ENCODE measurements at regions of chr22 and their contacts with region 1.

Region 1: DNA sequence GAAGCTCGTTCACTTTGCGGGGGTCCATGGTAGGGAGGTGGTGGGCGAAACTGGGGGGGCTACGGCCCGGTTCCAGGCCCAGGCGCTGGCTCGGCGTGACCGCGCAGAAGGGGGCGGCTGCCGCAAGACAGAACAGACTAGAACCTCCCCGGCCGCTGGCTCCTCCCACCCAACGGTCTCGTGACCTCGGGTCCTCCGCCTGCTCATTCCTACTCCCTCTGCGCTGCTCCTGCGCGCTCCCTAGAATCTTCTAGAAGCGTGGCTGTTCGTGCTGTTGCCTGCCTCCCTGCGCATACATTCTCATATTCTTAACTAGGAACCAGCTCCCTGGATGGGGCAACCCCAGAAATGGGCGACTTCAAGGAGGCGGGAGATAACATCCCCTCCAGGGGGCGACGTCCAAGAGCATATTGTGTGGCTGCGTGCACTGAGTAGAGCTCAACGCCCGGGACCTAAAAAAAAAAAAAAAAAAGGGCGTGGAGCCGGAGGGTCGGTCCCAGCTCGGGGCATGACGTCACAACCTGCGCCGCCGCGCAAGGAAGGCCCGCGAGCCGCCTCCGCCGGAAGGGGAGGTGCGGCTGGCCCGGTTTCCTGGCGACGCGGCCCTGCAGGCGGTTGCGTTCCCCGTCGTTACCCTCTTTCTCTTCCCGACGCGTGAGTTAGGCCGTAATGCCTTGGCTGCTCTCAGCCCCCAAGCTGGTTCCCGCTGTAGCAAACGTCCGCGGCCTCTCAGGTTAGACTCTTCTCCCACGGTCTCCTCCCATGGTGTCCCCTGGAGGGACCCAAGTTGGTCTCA is at the starts of genes ST13 and XPNPEP3:
- DNase-seq: peak; percentile 98 to 99 (median 99)
- H3K4me3 ChIP-seq: peak within 1 kb of the TSS; percentile 89 to 99 (median 92)
- H3K27ac ChIP-seq: peak within 1 kb of the TSS; percentile 93 to 99 (median 96)
- H3K4me1 ChIP-seq: peaks cover 22 to 56% of the 10 kb centered on the region in 2 donors
- H3K27me3 ChIP-seq: no peaks in the 10 kb centered on the region
- CTCF ChIP-seq: peak in 3 of 6 experiments; percentile 14 to 28 (median 20)
- POLR2A ChIP-seq: peak; percentile 63 to 86
- total RNA-seq, gene ST13: 187 to 575 (median 243) TPM
- total RNA-seq, gene XPNPEP3: 12.9 to 41.1 (median 23.7) TPM

Region 2: DNA sequence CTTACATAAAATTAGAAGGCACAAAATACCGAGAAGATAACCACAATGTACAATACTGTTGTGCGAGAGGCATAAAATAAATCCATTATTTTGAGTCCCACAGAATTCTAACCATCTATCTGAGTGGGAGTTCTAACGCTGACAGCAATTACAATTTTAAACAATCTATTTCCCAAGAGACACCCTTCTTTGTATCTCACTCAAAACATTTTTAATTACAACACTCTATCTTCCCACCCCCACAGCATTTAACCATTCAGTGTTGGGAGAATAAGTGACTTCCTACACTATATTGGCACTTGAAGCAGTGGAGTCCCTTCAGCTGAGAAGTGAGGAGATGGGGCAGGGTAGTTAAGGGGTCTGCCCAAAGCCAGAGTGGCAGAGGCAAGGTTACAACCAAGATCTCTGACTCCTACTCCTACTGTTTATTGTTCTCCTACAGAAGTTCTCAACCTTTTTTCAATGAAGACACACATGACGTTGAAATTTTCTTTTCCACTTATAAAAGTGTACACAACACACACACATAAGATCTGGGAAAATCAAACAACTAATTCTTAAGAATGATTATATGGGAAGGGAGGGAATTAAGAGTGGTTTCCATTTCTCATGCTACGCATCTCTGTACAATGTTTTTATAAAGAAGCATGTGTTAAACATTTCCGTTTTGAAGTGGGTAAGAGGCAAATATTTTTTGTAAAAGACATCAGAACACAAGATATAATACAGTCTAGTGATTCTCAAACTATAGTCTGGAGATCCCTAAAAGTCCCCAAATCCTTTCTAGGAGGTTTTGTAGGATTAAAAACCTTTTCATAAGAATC is 48.5 kb before region 1 on chr22:
- intact Hi-C with region 1: no loop called
- DNase-seq: no peak
- H3K4me3 ChIP-seq: no peak overlapping the region
- H3K27ac ChIP-seq: no peak overlapping the region
- H3K4me1 ChIP-seq: peaks cover 0 to 7% of the 10 kb centered on the region in 2 donors
- H3K27me3 ChIP-seq: no peaks in the 10 kb centered on the region
- CTCF ChIP-seq: no peak
- POLR2A ChIP-seq: no peak

Region 3: DNA sequence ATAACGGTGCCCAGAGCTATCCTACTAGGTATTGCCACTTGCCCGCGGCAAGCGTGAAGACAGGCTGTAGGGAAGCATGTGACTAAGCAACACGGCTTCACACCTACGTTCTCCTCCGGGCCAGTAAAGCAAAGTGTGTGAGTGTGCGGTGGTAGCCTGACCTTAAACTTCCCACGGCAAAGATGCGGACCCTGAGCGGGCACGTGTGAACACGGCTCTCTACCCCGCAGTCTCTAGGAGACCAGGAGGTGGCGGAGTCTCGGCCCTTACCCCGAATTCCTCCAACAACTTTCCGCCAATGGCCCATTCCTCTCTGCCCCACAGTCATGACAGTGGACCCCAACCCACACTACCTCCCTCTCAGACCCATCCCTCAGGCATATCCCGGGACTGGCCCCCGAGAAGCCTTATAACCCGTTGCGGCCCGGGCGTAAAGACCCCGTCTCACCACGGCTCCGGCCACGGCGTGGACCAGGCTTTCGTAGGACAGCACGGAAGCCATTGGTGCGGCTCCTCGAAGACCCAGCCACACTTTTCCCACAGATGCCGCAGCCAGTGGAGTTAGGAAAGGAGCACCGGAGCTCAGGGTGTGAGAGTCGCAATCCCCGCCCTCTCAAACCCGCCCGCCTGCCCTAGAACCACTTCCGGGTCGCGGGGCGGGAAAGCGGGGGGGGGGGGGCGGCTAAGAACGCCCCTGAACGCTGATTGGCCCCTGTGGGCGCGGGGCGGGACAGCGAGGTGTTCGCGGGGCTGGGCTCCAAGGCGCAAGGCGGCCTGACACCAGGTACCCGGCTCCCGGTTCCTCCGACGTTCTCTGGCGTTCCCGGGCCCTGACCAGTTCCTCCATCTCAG is 37.7 kb before region 1 on chr22 and contains the start of gene SLC25A17:
- intact Hi-C with region 1: no loop called
- DNase-seq: peak; percentile 87 to 92 (median 89)
- H3K4me3 ChIP-seq: peak within 1 kb of the TSS; percentile 54 to 100 (median 94)
- H3K27ac ChIP-seq: peak within 1 kb of the TSS; percentile 59 to 88 (median 72)
- H3K4me1 ChIP-seq: peaks cover 12 to 26% of the 10 kb centered on the region in 2 donors
- H3K27me3 ChIP-seq: no peaks in the 10 kb centered on the region
- CTCF ChIP-seq: peak; percentile 8 to 61 (median 38)
- POLR2A ChIP-seq: peak in 1 of 2 donors; percentile 39
- total RNA-seq, gene SLC25A17: 18.3 to 40.8 (median 22.4) TPM

Region 4: GRCh38 chr22:41169157-41169556 is 312.4 kb after region 1 on chr22:
- intact Hi-C with region 1: loop called in 1 of 2 experiments (anchors 10 kb)
- DNase-seq: no peak
- H3K4me3 ChIP-seq: no peak overlapping the region
- H3K27ac ChIP-seq: no peak overlapping the region
- H3K4me1 ChIP-seq: no peaks in the 10 kb centered on the region
- H3K27me3 ChIP-seq: no peaks in the 10 kb centered on the region
- CTCF ChIP-seq: no peak
- POLR2A ChIP-seq: no peak